Dorsolateral prefrontal cortex (tissue), 120 donors: ENCODE measurements at regions of chr6 and their contacts with region 1.

Region 1: GRCh38 chr6:110815217-110816109 is at the start of gene CDK19:
- DNase-seq: peak; percentile 97 to 98 (median 98)
- H3K4me3 ChIP-seq: peak within 1 kb of the TSS; percentile 69 to 100 (median 95)
- H3K27ac ChIP-seq: peak within 1 kb of the TSS; percentile 83 to 99 (median 97)
- H3K27me3 ChIP-seq: no peaks in the 10 kb centered on the region
- CTCF ChIP-seq: peak in 13 of 56 donors; percentile 5 to 45 (median 21)
- total RNA-seq, gene CDK19: 35.3 to 155 (median 56.4) TPM

Region 2: DNA sequence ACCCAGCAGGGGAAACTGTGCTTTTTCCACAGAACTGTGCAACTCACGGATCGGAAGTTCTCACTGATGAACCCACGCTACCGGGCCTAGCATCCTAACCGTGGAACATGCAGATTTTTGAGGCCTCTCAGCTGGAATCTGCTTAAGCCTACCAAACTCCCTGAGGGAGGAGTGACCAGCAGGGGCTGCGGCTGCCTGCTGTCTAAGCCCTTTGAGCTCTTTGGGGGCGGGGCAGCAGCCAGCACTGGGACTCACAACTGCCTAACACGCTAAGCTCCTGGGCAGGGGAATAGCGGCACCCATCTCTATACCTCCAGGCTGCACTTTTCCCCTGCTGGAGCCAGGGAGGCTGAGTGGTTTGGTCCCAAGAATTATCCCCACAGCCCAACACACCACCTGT is 436.9 kb before region 1 on chr6:
- intact Hi-C with region 1: no loop called
- DNase-seq: no peak
- H3K4me3 ChIP-seq: no peak overlapping the region
- H3K27ac ChIP-seq: no peak overlapping the region
- H3K27me3 ChIP-seq: no peaks in the 10 kb centered on the region
- CTCF ChIP-seq: no peak

Region 3: DNA sequence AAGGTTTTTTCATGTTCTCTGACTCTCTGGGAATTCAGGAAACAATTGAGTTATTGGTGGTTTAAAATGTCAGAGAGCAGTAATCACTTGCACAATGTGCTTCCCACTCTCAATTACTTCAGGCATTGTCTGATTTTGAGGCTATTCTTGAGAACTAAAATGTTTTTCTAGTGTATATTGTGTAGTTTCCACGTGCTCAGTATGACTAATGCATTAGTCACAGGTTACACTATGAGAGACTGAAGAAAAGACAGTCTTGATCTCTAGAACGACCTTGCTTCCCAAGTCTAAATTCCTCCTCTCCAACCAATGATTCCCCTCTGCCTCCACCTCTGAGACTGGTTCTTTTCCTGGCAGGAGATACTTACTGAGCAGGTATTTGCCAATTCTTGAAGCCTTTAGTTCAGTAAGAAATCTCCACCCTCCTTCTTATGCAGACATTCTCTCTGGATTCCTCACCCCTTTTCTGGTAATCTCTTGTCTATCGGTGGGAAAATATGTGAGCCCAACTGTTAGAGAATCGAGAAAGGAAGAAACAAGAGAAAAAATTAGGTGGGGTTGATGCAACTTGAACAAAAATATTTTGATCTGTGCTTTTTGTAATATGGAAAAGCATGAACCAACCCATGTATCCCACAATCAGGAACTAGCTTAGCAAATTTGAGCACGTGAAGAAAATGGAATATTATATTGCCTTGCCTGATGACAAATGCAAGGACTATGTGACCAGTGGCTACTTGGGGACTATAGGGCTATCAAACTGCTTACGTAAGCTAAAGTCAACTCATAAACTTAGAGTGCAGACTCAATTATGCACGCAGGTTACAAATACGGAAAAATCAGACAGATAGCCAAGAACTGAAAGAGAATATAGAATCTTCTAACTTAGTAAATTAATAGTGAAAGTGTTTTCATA is 278.0 kb before region 1 on chr6:
- intact Hi-C with region 1: loop called (anchors 2 to 5 kb)
- DNase-seq: no peak
- H3K4me3 ChIP-seq: no peak overlapping the region
- H3K27ac ChIP-seq: peak overlapping the region; percentile 52 to 100 (median 99)
- H3K27me3 ChIP-seq: no peaks in the 10 kb centered on the region
- CTCF ChIP-seq: peak in 2 of 56 donors; percentile 5 to 16

Region 4: DNA sequence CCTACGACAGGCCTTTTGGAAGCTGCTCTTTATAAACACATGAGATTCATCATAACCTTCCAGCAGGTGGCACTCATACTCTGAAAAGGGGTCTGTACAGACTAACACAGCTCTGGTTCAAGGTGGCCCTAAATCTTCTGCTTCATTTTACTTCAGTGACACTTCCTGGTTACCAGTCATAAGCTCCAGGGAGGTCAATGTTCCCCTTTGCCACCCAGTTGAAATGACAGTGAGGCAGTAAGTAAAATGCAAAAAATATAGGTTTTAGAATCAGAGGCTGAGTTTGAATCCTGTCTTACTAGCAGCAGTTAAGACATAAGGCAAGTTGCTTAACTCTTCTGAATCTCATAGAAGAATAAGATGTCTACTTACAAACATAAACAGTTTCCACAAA is 133.0 kb before region 1 on chr6:
- intact Hi-C with region 1: loop called (anchors 2 kb)
- DNase-seq: peak in 3 of 10 donors; percentile 51 to 69 (median 64)
- H3K4me3 ChIP-seq: peak overlapping the region in 6 of 59 donors; percentile 2 to 30 (median 10)
- H3K27ac ChIP-seq: peak overlapping the region in 54 of 59 donors; percentile 7 to 96 (median 82)
- H3K27me3 ChIP-seq: no peaks in the 10 kb centered on the region
- CTCF ChIP-seq: peak; percentile 45 to 89 (median 78)

Region 5: GRCh38 chr6:110859335-110859792 is 43.9 kb after region 1 on chr6:
- intact Hi-C with region 1: no loop called
- DNase-seq: no peak
- H3K4me3 ChIP-seq: peak overlapping the region in 2 of 59 donors; percentile 6 to 19
- H3K27ac ChIP-seq: no peak overlapping the region
- H3K27me3 ChIP-seq: no peaks in the 10 kb centered on the region
- CTCF ChIP-seq: no peak

Region 6: DNA sequence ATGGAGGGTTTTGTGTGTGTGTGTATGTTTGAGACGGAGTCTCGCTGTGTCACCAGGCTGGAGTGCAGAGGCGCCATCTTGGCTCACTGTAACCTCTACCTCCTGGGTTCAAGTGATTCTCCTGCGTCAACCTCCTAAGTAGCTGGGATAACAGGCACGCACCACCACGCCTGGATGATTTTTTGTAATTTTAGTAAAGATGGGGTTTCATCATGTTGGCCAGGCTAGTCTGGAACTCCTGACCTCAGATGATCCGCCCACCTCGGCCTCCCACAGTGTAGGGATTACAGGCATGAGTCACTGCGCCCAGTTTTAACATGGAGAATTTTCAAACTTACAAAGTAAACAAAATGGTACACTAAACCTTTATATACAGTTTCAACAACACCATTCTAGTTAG is 82.0 kb after region 1 on chr6:
- intact Hi-C with region 1: no loop called
- DNase-seq: no peak
- H3K4me3 ChIP-seq: no peak overlapping the region
- H3K27ac ChIP-seq: peak overlapping the region in 1 of 59 donors; percentile 13
- H3K27me3 ChIP-seq: no peaks in the 10 kb centered on the region
- CTCF ChIP-seq: no peak

Region 7: GRCh38 chr6:110958329-110959192 is 143.1 kb after region 1 on chr6 and contains the start of gene GTF3C6:
- intact Hi-C with region 1: loop called (anchors 5 kb)
- DNase-seq: peak; percentile 90 to 96 (median 94)
- H3K4me3 ChIP-seq: peak within 1 kb of the TSS; percentile 56 to 98 (median 88)
- H3K27ac ChIP-seq: peak within 1 kb of the TSS; percentile 78 to 100 (median 96)
- H3K27me3 ChIP-seq: no peaks in the 10 kb centered on the region
- CTCF ChIP-seq: peak in 26 of 56 donors; percentile 3 to 58 (median 30)
- total RNA-seq, gene GTF3C6: 30.8 to 68.0 (median 43.6) TPM

Region 8: GRCh38 chr6:110971468-110971867 is 156.0 kb after region 1 on chr6:
- intact Hi-C with region 1: no loop called
- DNase-seq: no peak
- H3K4me3 ChIP-seq: no peak overlapping the region
- H3K27ac ChIP-seq: no peak overlapping the region
- H3K27me3 ChIP-seq: no peaks in the 10 kb centered on the region
- CTCF ChIP-seq: no peak